ENCODE measurements at regions of chr17 and their contacts with region 1.

Region 1: GRCh38 chr17:19370493-19370960 is 7.8 kb upstream of the MAPK7 start:
- DNase-seq: peak; percentile 67 to 73
- ATAC-seq: peak; percentile 34
- H3K4me3 ChIP-seq: no peak overlapping the region
- H3K27ac ChIP-seq: no peak overlapping the region
- H3K4me1 ChIP-seq: no peaks in the 10 kb centered on the region
- H3K27me3 ChIP-seq: no peaks in the 10 kb centered on the region

Region 2: GRCh38 chr17:19398301-19399181 is 28.0 kb after region 1 on chr17:
- intact Hi-C with region 1: loop called in 1 of 2 experiments (anchors 5 kb)
- DNase-seq: peak; percentile 73 to 81
- ATAC-seq: peak; percentile 75
- H3K4me3 ChIP-seq: no peak overlapping the region
- H3K27ac ChIP-seq: peak overlapping the region; percentile 62 to 64
- H3K4me1 ChIP-seq: no peaks in the 10 kb centered on the region
- H3K27me3 ChIP-seq: no peaks in the 10 kb centered on the region

Region 3: DNA sequence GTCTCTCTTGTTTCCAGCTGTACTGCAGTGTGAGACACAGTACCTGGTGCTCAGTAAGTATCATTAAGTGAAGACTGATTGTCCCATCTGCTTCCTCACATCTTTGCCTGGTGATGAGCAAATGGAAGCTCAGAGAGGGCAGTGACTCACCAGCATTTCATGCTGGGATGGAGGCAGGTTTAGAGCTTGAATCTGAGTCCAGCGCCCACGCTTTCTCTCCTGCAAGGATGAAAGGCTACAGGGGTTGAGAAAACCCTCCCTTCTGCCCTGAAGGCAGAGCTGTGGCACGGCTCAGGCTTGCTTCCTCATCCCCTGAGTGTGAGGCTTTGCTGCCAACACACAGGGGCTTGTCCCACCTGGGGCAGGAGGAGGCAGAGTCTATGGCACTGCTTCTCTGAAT is 39.0 kb after region 1 on chr17:
- intact Hi-C with region 1: loop called (anchors 5 kb)
- DNase-seq: no peak
- ATAC-seq: no peak
- H3K4me3 ChIP-seq: no peak overlapping the region
- H3K27ac ChIP-seq: no peak overlapping the region
- H3K4me1 ChIP-seq: no peaks in the 10 kb centered on the region
- H3K27me3 ChIP-seq: no peaks in the 10 kb centered on the region